H1 (cell line): ENCODE measurements at regions of chr1 and their contacts with region 1.

Region 1: GRCh38 chr1:28518000-28518744 is 12.3 kb downstream of the RCC1 start:
- DNase-seq: peak in 1 of 2 experiments; percentile 98
- H3K4me3 ChIP-seq: peak overlapping the region; percentile 66 to 83 (median 78)
- H3K27ac ChIP-seq: peak overlapping the region; percentile 95
- H3K4me1 ChIP-seq: peaks cover 7 to 16% (median 11%) of the 10 kb centered on the region in 4 experiments
- H3K27me3 ChIP-seq: no peaks in the 10 kb centered on the region
- CTCF ChIP-seq: peak; percentile 73 to 91 (median 88)
- EP300 ChIP-seq: peak in 1 of 2 experiments; percentile 43; a peak in 1 of 3 replicates
- POLR2A ChIP-seq: peak; percentile 82 to 84; a peak in 2 of 3 replicates
- RAD21 ChIP-seq: peak; percentile 75 to 87

Region 2: GRCh38 chr1:28552758-28553663 is 34.8 kb after region 1 on chr1 and contains the start of gene TRNAU1AP:
- CTCF ChIA-PET with region 1: interaction called, 5 read pairs
- POLR2A ChIA-PET with region 1: interaction called, 89 read pairs
- DNase-seq: peak; percentile 82 to 98
- H3K4me3 ChIP-seq: peak within 1 kb of the TSS; percentile 72 to 96 (median 90)
- H3K27ac ChIP-seq: peak within 1 kb of the TSS; percentile 49
- H3K4me1 ChIP-seq: no peaks in the 10 kb centered on the region
- H3K27me3 ChIP-seq: no peaks in the 10 kb centered on the region
- CTCF ChIP-seq: no peak
- EP300 ChIP-seq: peak in 1 of 2 experiments; percentile 65; a peak in 1 of 3 replicates
- POLR2A ChIP-seq: no peak; a peak in 1 of 3 replicates
- RAD21 ChIP-seq: peak; percentile 2 to 18; a peak in 1 of 4 replicates
- total RNA-seq, gene TRNAU1AP: 30.8 and 35.2 TPM in 2 replicates

Region 3: GRCh38 chr1:28648474-28649198 is 130.5 kb after region 1 on chr1 and contains the start of gene RNU11:
- CTCF ChIA-PET with region 1: interaction called, 3 read pairs
- POLR2A ChIA-PET with region 1: interaction called, 132 read pairs
- DNase-seq: peak; percentile 75 to 90
- H3K4me3 ChIP-seq: peak within 1 kb of the TSS; percentile 41 to 57 (median 45)
- H3K27ac ChIP-seq: peak within 1 kb of the TSS; percentile 99
- H3K4me1 ChIP-seq: peaks cover 0 to 4% (median 0%) of the 10 kb centered on the region in 4 experiments; a peak in 4 of 7 replicates
- H3K27me3 ChIP-seq: no peaks in the 10 kb centered on the region
- CTCF ChIP-seq: no peak
- EP300 ChIP-seq: peak in 1 of 2 experiments; percentile 73; a peak in 2 of 3 replicates
- POLR2A ChIP-seq: peak; percentile 100
- RAD21 ChIP-seq: 0 out of 4 replicates have a peak, but pooled peaks of 1 of the 2 experiments have one; percentile 8
- total RNA-seq, gene RNU11: not detected in 2 replicates